GM10248 (cell line): ENCODE measurements at regions of chr9 and their contacts with region 1.

Region 1: GRCh38 chr9:68802525-68803015 is 97.5 kb downstream of the PIP5K1B start:
- DNase-seq: peak; percentile 71
- CTCF ChIP-seq: no peak

Region 2: GRCh38 chr9:68817079-68817875 is 14.7 kb after region 1 on chr9:
- CTCF ChIA-PET with region 1: interaction called, 13 read pairs
- POLR2A ChIA-PET with region 1: no interaction called
- DNase-seq: no peak
- CTCF ChIP-seq: no peak